Left ventricle myocardium superior (tissue), 1 donor: ENCODE measurements at regions of chr20 and their contacts with region 1.

Region 1: DNA sequence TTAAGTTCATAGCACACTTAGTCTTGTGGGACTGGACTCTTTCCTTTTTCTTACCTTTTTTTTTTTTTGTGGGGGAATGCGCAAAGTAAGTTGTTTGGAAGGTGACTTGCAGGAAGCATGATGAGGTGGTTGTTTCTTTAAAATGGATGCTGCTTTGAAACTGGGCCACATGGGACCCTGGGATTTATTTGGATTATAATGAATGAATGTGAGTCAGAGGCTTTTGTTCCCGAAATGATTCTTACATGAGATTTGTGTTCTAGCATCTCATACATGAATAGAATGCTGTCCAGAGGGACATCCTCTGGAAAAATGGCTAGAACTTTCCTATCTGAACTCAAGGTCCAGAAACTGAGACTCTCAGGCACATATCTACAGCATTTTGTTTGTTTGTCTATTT is 236.6 kb upstream of the RNF24 start:
- DNase-seq: no peak
- ATAC-seq: no peak

Region 2: DNA sequence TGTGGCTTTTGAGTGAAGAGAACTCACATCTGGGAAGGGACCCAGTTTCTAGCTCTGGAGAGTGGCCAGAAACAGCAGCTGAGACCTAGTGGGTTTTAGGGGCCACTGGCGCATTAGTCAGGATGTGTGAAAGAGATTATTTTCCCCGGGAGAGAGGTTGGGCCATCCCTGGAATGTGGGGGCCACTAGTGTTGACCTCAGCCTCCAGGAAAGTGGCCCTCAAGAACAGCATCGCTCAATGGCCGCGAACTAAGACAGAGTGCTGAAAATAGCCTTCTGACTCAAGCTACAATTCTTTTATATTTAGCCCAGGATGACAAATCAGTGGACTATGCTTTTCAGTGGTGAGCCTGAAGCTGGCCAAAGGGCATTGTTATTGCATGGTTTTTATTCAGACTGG is 26.3 kb before region 1 on chr20:
- intact Hi-C with region 1: no loop called
- DNase-seq: no peak
- ATAC-seq: peak; percentile 84

Region 3: DNA sequence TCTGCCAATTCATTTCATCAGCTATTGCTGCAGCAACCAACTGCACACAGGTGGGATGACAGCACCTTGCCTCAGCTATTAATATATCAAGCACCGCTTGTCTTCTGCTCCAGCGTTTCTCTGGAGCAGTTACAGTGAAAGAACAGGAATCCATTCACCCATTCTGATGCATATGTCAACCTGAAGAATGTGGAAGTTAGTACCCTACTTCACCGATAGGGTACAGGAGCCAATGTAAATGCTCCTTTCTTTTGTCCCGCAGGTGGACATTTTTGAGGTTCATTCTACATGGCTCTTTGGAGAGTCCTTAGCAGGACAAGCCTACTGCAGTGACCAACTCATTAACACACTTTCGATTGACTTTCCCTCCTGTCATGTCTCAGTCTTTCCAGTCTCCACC is 329.8 kb after region 1 on chr20:
- intact Hi-C with region 1: loop called (anchors 5 kb)
- DNase-seq: no peak
- ATAC-seq: no peak

Region 4: GRCh38 chr20:5041433-5041832 is 789.4 kb after region 1 on chr20:
- intact Hi-C with region 1: no loop called
- DNase-seq: no peak
- ATAC-seq: no peak